ENCODE measurements at regions of chr14 and their contacts with region 1.

Region 1: GRCh38 chr14:100285021-100285912 is 21.0 kb downstream of the SLC25A29 start:
- DNase-seq: peak; percentile 96
- CTCF ChIP-seq: peak; percentile 90

Region 2: GRCh38 chr14:100246826-100247428 is 38.3 kb before region 1 on chr14:
- CTCF ChIA-PET with region 1: interaction called, 11 read pairs
- POLR2A ChIA-PET with region 1: interaction called, 4 read pairs
- DNase-seq: no peak
- CTCF ChIP-seq: peak; percentile 29

Region 3: GRCh38 chr14:100263144-100263543 is 22.1 kb before region 1 on chr14:
- CTCF ChIA-PET with region 1: interaction called, 54 read pairs
- POLR2A ChIA-PET with region 1: no interaction called
- DNase-seq: no peak
- CTCF ChIP-seq: no peak

Region 4: GRCh38 chr14:100297302-100298300 is 12.3 kb after region 1 on chr14:
- CTCF ChIA-PET with region 1: interaction called, 121 read pairs
- POLR2A ChIA-PET with region 1: no interaction called
- DNase-seq: peak; percentile 91
- CTCF ChIP-seq: no peak

Region 5: DNA sequence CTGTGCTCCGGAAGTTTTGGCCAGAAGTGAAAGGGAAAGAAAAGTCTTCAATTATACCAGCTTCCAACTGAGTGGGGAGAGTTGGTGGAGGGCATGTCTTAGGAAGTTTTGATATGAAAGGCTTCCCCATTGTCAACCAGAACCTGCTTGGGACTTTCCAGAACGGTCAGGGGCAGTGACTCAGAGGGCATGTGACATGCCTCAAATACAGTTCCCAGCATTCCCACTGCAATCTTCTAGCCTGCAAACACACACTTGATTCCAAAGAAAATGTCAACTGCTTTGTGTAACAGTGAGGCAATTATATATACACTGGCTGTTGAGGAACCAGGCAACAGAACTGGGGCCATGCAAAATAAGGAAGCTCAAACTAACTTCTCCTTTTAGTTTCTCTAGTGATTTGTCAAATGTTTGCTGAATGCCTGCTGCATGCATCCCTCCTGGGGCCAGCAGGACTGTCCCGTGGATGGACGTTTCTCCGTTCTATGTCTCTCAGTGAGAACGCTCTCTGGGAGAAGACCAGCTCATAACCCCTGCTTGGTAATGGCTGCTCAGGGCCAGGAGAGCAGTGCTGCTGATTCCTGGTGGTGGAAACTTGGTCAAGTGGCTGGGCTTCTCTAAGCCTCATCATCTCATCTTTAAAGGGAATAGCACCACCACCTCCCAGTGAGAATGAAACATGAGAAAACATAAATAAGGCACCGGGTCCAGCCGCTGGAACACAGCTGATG is 56.2 kb after region 1 on chr14:
- CTCF ChIA-PET with region 1: interaction called, 11 read pairs
- POLR2A ChIA-PET with region 1: no interaction called
- DNase-seq: peak; percentile 75
- CTCF ChIP-seq: no peak

Measured in GM10248 (cell line).